ENCODE measurements at regions of chr12 and their contacts with region 1.

Region 1: GRCh38 chr12:12376646-12377448 is 20.0 kb downstream of the BORCS5 start:
- DNase-seq: peak in 1 of 5 donors; percentile 39
- H3K4me3 ChIP-seq: no peak overlapping the region
- H3K27ac ChIP-seq: no peak overlapping the region
- H3K4me1 ChIP-seq: peaks cover 6% of the 10 kb centered on the region
- H3K27me3 ChIP-seq: no peaks in the 10 kb centered on the region
- CTCF ChIP-seq: peak; percentile 72 to 87 (median 75)
- EP300 ChIP-seq: no peak
- POLR2A ChIP-seq: no peak

Region 2: DNA sequence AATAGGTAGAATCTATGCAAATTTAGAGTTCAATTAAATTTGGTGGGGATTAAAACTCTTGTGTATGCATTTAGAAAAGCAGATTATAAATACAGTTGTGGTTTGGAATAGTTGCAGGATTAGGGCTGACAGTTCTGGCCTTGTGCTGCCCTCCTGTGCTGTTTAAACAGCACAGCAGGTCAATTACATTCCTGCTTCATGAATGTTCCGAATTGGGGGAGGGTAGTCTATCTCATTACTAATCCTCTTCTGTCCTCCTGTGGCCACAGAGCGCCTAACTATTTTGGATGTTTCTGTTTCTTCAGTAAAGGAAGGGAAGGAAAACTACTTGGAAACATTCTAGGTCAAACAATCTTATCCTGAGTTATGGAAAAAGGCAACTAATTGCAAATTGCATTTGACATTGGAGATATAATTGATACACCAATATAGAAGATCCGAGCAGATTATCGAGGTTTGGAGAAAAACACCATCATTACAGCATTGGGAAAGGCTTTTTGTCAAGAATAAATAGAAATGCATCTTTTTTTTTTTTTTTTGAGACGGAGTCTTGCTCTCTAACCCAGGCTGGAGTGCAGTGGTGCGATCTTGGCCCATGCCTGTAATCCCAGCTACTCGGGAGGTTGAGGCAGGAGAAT is 327.9 kb after region 1 on chr12:
- intact Hi-C with region 1: loop called (anchors 2 to 5 kb)
- DNase-seq: peak in 4 of 5 donors; percentile 59 to 74 (median 62)
- H3K4me3 ChIP-seq: no peak overlapping the region
- H3K27ac ChIP-seq: no peak overlapping the region
- H3K4me1 ChIP-seq: no peaks in the 10 kb centered on the region
- H3K27me3 ChIP-seq: no peaks in the 10 kb centered on the region
- CTCF ChIP-seq: peak; percentile 82 to 99 (median 98)
- EP300 ChIP-seq: no peak
- POLR2A ChIP-seq: no peak

Measured in ovary (tissue), 10 donors.